ENCODE measurements at regions of chr11 and their contacts with region 1.

Region 1: DNA sequence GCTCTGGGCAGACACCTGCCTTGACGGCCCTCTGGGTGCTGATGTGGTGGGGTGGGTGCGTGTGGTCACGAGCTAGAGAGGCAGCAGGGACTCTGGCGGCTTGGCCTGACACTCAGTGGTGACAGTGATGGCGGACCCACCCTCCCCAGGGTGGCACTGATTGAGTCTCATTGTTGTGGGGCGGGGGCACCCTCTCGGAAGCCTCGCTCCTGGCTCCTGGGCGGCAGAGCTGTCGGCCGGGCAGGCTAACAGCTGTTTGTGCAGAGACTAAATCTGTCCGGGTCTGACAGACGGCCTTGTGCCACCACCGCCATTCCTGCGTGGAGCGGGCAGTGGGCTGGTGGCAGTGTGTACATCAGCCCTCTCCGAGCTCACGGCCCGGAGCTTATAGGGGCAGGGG is 15.6 kb downstream of the FLRT1 start:
- DNase-seq: no peak
- ATAC-seq: no peak
- H3K4me3 ChIP-seq: no peak overlapping the region
- H3K27ac ChIP-seq: no peak overlapping the region
- H3K4me1 ChIP-seq: no peaks in the 10 kb centered on the region
- CTCF ChIP-seq: no peak
- EP300 ChIP-seq: no peak
- POLR2A ChIP-seq: no peak
- RAD21 ChIP-seq: no peak

Region 2: DNA sequence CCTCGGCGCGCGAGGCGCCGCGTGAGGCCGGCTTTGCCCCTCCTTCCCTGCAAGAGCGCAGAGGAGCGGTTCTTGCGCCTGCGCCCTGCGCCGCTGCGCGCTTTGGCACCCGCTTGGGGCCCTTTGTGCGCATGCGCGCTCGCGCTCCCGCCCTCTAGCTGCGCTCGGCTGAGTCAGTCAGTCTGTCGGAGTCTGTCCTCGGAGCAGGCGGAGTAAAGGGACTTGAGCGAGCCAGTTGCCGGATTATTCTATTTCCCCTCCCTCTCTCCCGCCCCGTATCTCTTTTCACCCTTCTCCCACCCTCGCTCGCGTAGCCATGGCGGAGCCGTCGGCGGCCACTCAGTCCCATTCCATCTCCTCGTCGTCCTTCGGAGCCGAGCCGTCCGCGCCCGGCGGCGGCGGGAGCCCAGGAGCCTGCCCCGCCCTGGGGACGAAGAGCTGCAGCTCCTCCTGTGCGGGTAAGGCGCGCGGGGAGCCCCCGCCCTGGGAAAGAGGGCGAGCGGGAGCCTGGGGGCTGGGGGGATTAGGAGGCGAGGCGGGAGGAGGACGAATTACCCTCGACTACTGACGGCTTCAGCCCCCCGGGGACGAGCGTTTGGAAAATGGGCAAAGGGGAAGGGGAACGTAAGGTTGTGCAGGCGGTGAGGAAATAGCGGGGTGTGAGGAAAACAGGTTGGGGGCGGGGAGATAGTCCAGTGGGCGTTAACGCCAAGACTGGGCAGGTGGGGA is 369.8 kb before region 1 on chr11 and contains the start of gene RTN3:
- CTCF ChIA-PET with region 1: no interaction called
- POLR2A ChIA-PET with region 1: no interaction called
- DNase-seq: peak; percentile 94 to 99
- ATAC-seq: peak; percentile 89 to 95
- H3K4me3 ChIP-seq: peak within 1 kb of the TSS; percentile 82
- H3K27ac ChIP-seq: peak within 1 kb of the TSS; percentile 90 to 95
- H3K4me1 ChIP-seq: peaks cover 25% of the 10 kb centered on the region
- CTCF ChIP-seq: no peak
- EP300 ChIP-seq: no peak
- POLR2A ChIP-seq: peak; percentile 89
- RAD21 ChIP-seq: peak in 1 of 2 experiments; percentile 10; a peak in 1 of 5 replicates
- polyA plus RNA-seq, gene RTN3: 167 and 196 TPM in 2 replicates

Region 3: GRCh38 chr11:64036087-64037026 is 14.9 kb before region 1 on chr11:
- CTCF ChIA-PET with region 1: interaction called, 11 read pairs
- POLR2A ChIA-PET with region 1: no interaction called
- DNase-seq: no peak
- ATAC-seq: peak; percentile 41 to 56; a peak in 4 of 6 replicates
- H3K4me3 ChIP-seq: peak overlapping the region; percentile 66
- H3K27ac ChIP-seq: peak overlapping the region; percentile 50 to 78; a peak in 5 of 6 replicates
- H3K4me1 ChIP-seq: peaks cover 19% of the 10 kb centered on the region
- CTCF ChIP-seq: 0 out of 3 replicates have a peak, but pooled peaks have one; percentile 10
- EP300 ChIP-seq: no peak
- POLR2A ChIP-seq: no peak
- RAD21 ChIP-seq: no peak

Region 4: DNA sequence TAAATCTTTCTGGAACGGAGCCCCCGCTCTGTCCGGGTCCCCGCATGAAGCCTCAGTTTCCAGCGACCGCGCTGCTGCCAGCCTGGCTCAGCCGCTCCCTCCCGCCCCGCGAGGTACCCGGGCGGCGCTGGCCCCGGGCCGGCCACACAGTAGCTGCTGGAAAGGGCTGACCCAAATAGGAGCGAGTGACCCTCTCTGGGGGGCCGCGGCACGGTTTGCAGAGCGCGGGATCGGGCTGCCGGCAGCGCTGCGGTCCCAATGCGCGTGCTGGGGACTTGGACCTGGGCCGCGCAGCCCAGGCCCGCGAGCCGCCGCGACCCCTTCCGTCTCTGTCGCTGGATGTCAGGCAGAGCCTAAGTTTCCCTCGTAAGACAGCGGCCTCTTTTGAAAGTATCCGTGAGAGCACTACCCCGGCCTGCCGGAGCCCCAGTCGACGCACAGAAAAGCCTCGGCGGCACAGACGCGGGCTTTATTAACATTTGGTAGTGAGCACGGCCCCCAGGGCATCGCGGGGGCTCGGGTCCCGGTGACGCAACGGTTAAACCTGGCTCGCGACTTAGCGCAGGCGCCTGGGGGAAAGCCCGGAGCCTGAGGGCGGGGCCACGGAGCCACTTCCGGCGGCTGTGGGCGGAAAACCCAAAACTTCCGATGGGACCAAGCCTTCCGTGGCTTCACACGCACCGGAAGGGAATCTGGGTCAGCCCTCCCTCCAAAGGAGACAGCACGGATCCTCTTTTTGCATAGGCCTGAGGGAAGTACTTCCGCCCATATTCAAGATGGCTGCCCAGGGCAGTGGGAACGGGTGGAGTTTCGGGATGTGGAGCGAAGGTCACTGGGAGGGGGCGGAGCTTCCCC is 218.3 kb after region 1 on chr11:
- CTCF ChIA-PET with region 1: no interaction called
- POLR2A ChIA-PET with region 1: no interaction called
- DNase-seq: peak; percentile 87 to 100
- ATAC-seq: peak; percentile 80 to 91
- H3K4me3 ChIP-seq: peak overlapping the region; percentile 72
- H3K27ac ChIP-seq: peak overlapping the region; percentile 94 to 97
- H3K4me1 ChIP-seq: peaks cover 32% of the 10 kb centered on the region
- CTCF ChIP-seq: peak; percentile 12; the same call in 1 of the 3 replicates
- EP300 ChIP-seq: no peak
- POLR2A ChIP-seq: peak; percentile 32
- RAD21 ChIP-seq: no peak

Measured in A549 (cell line).